HEK293 (cell line): ENCODE measurements at regions of chr19 and their contacts with region 1.

Region 1: DNA sequence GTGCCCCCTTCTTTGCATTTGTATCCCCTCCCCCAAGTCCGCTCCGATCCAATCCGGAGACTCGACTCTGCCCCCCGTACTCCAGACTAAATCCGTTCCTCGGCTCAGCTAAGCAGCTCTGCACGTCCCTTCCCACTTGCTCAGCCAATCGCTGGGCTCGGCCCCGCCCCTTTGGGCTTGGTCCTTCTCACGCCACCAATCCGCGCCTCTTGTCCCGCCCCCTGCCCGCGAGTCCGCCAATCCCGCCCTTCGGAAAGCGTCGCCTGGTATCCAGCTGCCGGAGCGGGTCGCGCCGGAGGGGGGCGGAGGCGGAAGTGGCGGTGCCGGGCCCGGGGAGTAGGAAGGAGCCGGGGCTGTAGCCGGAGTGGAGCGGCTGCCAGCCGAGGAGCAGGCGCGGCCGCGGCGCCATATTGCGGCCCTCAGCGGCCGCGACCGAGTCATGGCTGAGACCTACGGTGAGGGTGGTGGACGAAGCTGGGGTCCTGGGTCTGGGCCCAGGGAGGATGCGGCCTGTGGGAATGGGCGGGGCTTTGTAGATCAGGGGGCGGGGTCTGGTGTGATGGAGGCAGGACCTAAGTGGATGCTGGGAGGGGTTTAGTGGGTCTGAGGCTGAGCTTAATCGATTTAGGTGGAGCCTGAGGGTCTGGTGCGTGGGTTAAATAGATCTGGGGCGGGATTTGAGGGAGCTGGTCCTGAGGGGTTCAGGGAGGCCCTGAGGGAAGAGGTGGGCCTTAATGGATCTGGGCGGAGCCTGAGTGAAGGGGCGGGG is at the start of gene RAB4B:
- H3K4me3 ChIP-seq: peak within 1 kb of the TSS; percentile 68
- H3K27ac ChIP-seq: peak within 1 kb of the TSS; percentile 95
- H3K4me1 ChIP-seq: peaks cover 13% of the 10 kb centered on the region
- CTCF ChIP-seq: peak; percentile 55

Region 2: DNA sequence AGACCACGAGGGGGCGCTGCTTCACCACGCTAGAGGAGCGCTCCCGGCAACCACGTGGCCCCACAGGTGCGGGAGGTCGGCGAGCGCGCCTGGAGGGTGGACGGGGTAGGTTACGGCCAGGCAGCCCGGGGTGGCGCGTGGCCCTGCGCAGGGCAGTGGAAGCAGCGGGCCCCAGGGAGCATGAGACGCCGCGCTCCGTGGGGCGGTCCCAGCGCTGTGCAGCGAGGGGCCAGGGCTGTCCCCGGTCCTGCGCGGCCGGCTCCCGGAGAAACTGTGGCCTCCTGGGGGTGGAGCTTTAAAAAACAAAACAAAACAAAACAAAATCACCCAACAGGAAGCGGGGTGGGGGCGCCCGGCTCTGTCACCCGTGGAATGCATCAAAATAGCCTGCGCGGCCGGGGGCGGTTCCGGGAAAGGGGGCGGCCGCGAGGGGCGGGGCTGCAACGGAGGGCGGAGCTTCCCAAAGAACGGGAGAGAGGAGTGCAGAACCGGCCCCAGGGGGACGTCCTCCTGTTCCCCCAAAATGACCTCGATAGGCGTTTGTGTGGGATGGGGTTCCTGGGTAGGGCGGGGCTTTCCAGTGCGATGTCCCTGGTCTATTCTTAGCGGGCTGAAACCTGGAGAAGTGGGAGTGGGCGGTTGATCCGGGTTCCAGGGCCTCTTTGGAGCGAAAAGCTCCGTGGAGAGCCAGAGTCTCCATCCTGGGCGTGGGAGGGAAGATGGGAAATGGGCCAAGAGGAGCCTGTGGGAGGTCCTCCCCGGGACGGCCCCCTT is 115.0 kb before region 1 on chr19:
- CTCF ChIA-PET with region 1: interaction called, 13 read pairs
- POLR2A ChIA-PET with region 1: interaction called, 19 read pairs
- H3K4me3 ChIP-seq: peak overlapping the region; percentile 56
- H3K27ac ChIP-seq: peak overlapping the region; percentile 89; the same call in 1 of the 2 replicates
- H3K4me1 ChIP-seq: peaks cover 13% of the 10 kb centered on the region
- CTCF ChIP-seq: peak; percentile 100

Region 3: DNA sequence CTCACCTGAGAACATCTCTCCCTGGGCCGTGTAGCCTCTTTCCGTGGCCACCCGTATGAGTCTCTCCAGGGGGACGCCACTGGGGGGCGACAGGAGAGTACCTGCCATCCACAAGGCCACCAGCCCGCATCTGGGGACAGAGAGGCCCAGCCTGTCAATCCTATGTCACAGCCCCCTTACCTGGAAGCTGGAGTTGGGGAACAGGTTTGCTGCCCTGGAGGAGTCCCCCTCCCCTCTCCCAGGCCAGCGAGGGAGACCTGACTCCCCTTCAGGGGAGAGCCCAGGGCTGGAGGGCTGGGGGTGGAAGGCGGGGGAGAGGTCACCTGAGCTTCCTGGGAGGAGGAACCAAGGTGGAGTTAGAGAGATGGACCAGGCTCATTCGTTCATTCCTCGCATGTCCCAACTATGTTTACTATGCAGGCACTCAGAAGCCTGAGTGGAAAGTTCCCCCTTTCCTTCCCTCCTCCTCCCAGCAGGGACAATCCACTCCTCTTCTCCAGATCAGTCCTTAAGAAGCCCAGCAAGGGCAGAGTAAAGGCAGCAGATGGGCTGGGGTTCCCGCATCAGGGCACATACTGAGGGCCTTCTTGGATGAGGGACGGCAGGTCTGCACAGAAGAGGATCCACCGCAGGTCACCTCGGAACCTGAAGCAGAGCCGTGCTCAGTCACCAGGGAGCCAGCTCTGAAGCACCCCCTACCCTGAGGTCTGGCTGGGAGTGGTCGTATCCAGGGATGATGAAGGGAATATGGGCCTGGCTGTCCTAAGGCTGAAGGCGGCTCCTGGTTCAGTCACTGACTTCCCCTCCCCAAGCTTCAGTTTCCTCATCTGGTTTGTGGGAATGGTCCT is 33.3 kb before region 1 on chr19:
- CTCF ChIA-PET with region 1: interaction called, 5 read pairs
- POLR2A ChIA-PET with region 1: interaction called, 180 read pairs
- H3K4me3 ChIP-seq: no peak overlapping the region
- H3K27ac ChIP-seq: peak overlapping the region; percentile 49; the same call in 1 of the 2 replicates
- H3K4me1 ChIP-seq: peaks cover 11% of the 10 kb centered on the region
- CTCF ChIP-seq: peak; percentile 68

Region 4: DNA sequence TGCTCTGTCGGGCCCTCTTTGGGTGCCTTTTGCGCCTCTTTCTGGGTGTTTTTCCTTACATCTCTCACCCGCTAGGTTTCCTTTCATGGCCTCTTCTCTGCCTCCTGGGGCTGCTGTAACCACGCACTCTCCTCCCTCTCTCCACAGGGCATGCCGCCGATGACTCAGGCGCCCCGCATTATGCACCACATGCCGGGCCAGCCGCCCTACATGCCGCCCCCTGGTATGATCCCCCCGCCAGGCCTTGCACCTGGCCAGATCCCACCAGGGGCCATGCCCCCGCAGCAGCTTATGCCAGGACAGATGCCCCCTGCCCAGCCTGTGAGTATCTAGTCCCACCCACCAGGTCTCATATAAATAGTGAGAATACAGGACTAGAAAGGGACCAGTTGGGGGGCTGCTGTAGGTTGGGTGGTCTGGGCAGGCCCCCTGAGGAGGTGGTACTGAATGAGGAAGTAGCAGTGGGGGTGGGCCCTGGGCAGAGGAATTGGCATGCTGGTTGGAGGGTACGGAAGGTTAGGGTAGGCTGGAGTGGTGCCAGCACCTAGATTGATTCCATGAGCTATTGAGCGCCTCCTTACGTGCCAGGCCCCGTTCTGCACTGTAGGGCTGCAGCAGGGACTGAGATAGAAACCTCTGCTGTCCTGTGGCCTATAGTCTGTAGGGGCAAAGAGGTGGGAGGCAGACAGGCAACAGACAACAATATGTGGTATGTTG is 15.2 kb before region 1 on chr19:
- CTCF ChIA-PET with region 1: interaction called, 5 read pairs
- POLR2A ChIA-PET with region 1: interaction called, 32 read pairs
- H3K4me3 ChIP-seq: no peak overlapping the region
- H3K27ac ChIP-seq: peak overlapping the region; percentile 34; the same call in 1 of the 2 replicates
- H3K4me1 ChIP-seq: no peaks in the 10 kb centered on the region
- CTCF ChIP-seq: no peak

Region 5: GRCh38 chr19:40806488-40807468 is 28.7 kb after region 1 on chr19:
- CTCF ChIA-PET with region 1: interaction called, 61 read pairs
- POLR2A ChIA-PET with region 1: interaction called, 86 read pairs
- H3K4me3 ChIP-seq: no peak overlapping the region
- H3K27ac ChIP-seq: peak overlapping the region; percentile 67
- H3K4me1 ChIP-seq: peaks cover 65% of the 10 kb centered on the region
- CTCF ChIP-seq: peak; percentile 97

Region 6: GRCh38 chr19:40954573-40954972 is 176.5 kb after region 1 on chr19:
- CTCF ChIA-PET with region 1: no interaction called
- POLR2A ChIA-PET with region 1: no interaction called
- H3K4me3 ChIP-seq: no peak overlapping the region
- H3K27ac ChIP-seq: no peak overlapping the region
- H3K4me1 ChIP-seq: no peaks in the 10 kb centered on the region
- CTCF ChIP-seq: no peak